ENCODE measurements at regions of chr19 and their contacts with region 1.

Region 1: GRCh38 chr19:11887611-11888531 is at the start of gene ZNF69:
- DNase-seq: peak; percentile 59 to 92
- H3K4me3 ChIP-seq: peak within 1 kb of the TSS; percentile 72 to 80
- H3K27ac ChIP-seq: peak within 1 kb of the TSS; percentile 88 to 91
- H3K4me1 ChIP-seq: peaks cover 0 to 7% of the 10 kb centered on the region in 2 donors
- H3K27me3 ChIP-seq: no peaks in the 10 kb centered on the region
- CTCF ChIP-seq: peak in 1 of 3 experiments; percentile 40
- total RNA-seq, gene ZNF69: 0.85 TPM

Region 2: GRCh38 chr19:11693495-11694173 is 194.2 kb before region 1 on chr19:
- intact Hi-C with region 1: no loop called
- DNase-seq: no peak
- H3K4me3 ChIP-seq: peak overlapping the region; percentile 61 to 89
- H3K27ac ChIP-seq: no peak overlapping the region
- H3K4me1 ChIP-seq: peaks cover 0 to 2% of the 10 kb centered on the region in 2 donors
- H3K27me3 ChIP-seq: no peaks in the 10 kb centered on the region
- CTCF ChIP-seq: no peak

Region 3: DNA sequence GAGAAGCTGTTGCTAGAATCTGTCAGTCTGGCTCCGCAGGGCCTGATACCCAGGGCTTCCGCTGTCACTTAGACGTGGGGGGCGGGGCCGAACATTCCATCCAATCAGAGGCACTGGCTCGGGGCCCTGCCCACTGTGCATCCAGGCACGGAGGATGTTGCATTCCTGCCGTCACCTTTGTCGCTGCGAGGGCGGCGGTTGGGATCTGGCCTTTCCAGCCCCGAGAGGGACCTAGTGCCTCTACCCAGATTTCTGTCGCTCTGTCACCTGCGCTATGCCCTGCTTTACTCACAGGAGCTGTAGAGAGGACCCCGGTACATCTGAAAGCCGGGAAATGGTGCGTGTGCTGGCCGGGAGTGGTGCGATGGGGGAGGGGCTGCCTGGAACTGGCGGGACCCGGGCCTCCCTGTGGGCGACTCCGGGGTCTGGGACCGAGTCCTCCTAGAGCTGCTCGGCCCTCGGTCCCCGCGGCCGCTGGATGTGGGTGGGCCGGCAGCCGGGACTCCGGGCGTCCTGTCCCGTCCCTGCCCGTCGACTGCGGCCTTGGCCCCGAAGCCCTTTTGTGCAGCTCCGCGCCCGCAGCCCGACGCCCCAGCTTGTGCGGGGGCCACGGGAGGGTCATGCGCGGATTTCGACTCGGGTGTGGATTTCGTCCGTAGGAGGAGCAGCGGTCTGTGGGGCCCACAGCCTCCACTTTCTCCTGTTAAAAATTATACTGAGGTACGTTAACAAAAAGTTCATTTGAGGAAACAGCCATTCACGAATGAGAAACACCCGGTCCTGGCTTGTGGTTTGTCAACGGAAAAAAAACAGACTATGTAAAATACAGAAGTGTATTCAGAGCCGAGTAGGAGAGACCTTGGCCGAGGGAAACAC is 39.0 kb before region 1 on chr19 and contains the start of gene ZNF439:
- intact Hi-C with region 1: no loop called
- DNase-seq: peak; percentile 71 to 93
- H3K4me3 ChIP-seq: peak within 1 kb of the TSS; percentile 63 to 89
- H3K27ac ChIP-seq: peak within 1 kb of the TSS; percentile 53 to 62
- H3K4me1 ChIP-seq: peaks cover 2 to 3% of the 10 kb centered on the region in 2 donors
- H3K27me3 ChIP-seq: no peaks in the 10 kb centered on the region
- CTCF ChIP-seq: no peak
- total RNA-seq, gene ZNF439: 2.3 TPM

Region 4: DNA sequence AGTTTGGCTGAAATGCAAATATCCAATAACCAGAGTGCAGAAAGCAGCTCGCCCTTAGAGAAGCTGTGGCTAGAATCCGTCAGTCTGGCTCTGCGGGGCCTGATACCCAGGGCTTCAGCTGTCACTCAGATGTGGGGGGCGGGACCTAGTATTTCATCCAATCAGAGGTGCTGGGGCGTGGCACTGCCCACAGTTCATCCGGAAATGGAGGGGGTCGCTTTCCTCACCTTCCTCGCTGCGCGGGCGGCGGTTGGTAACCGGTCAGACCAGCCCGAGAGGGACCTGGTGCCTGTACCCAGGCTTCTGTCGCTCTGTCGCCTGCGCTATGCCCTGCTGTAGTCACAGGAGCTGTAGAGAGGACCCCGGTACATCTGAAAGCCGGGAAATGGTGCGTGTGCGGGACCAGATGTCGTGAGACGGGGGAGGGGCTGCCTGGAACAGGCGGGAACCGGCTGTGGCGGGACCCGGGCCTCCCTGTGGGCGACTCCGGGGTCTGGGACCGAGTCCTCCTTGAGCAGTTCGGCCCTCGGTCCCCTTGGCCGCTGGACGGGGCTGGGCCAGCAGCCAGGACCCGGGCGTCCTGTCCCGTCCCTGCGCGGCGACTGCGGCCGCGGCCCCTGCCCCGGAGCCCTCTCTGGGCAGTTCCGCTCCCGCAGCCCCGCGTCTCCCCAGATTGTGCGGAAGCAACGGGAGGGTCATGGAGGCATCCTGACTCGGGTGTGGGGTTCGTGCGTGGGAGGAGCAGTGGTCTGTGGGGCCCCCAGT is 37.2 kb after region 1 on chr19 and contains the start of gene ZNF700:
- intact Hi-C with region 1: loop called (anchors 2 kb)
- DNase-seq: peak; percentile 77 to 97
- H3K4me3 ChIP-seq: peak within 1 kb of the TSS; percentile 84 to 88
- H3K27ac ChIP-seq: peak within 1 kb of the TSS; percentile 92 to 93
- H3K4me1 ChIP-seq: peaks cover 3 to 10% of the 10 kb centered on the region in 2 donors
- H3K27me3 ChIP-seq: no peaks in the 10 kb centered on the region
- CTCF ChIP-seq: no peak
- total RNA-seq, gene ZNF700: 4.4 TPM